Naive thymus-derived CD4-positive, alpha-beta T cell (primary cell): ENCODE measurements at regions of chr2 and their contacts with region 1.

Region 1: GRCh38 chr2:37672104-37672869 is 845 bp upstream of the CDC42EP3 start:
- DNase-seq: peak; percentile 48 to 74 (median 62)
- ATAC-seq: peak; percentile 68
- H3K4me3 ChIP-seq: peak overlapping the region; percentile 86
- H3K4me3 Mint-ChIP-seq: peak overlapping the region; percentile 78 to 96 (median 89)
- H3K27ac ChIP-seq: peak overlapping the region; percentile 72
- H3K27ac Mint-ChIP-seq: peak overlapping the region in 8 of 9 donors; percentile 65 to 91 (median 84)
- H3K4me1 ChIP-seq: peaks cover 18 to 25% of the 10 kb centered on the region in 2 donors
- H3K4me1 Mint-ChIP-seq: peaks cover 27 to 42% (median 41%) of the 10 kb centered on the region in 7 donors
- H3K27me3 ChIP-seq: no peaks in the 10 kb centered on the region
- H3K27me3 Mint-ChIP-seq: peaks cover 0 to 2% (median 0%) of the 10 kb centered on the region in 5 donors

Region 2: GRCh38 chr2:37324786-37325624 is 347.3 kb before region 1 on chr2 and contains the start of gene PRKD3:
- CTCF ChIA-PET with region 1: no interaction called
- POLR2A ChIA-PET with region 1: interaction called, 3 read pairs
- intact Hi-C with region 1: loop called (anchors 5 kb)
- DNase-seq: peak; percentile 46 to 72 (median 65)
- ATAC-seq: peak; percentile 88
- H3K4me3 ChIP-seq: peak within 1 kb of the TSS; percentile 75
- H3K4me3 Mint-ChIP-seq: peak within 1 kb of the TSS; percentile 95 to 99 (median 98)
- H3K27ac ChIP-seq: peak within 1 kb of the TSS; percentile 73
- H3K27ac Mint-ChIP-seq: peak within 1 kb of the TSS; percentile 92 to 98 (median 95)
- H3K4me1 ChIP-seq: peaks cover 30 to 31% of the 10 kb centered on the region in 2 donors
- H3K4me1 Mint-ChIP-seq: peaks cover 18 to 48% (median 36%) of the 10 kb centered on the region in 7 donors
- H3K27me3 ChIP-seq: no peaks in the 10 kb centered on the region
- H3K27me3 Mint-ChIP-seq: peaks cover 0 to 56% (median 21%) of the 10 kb centered on the region in 5 donors
- total RNA-seq, gene PRKD3: 12.8 to 47.3 (median 46.4) TPM

Region 3: DNA sequence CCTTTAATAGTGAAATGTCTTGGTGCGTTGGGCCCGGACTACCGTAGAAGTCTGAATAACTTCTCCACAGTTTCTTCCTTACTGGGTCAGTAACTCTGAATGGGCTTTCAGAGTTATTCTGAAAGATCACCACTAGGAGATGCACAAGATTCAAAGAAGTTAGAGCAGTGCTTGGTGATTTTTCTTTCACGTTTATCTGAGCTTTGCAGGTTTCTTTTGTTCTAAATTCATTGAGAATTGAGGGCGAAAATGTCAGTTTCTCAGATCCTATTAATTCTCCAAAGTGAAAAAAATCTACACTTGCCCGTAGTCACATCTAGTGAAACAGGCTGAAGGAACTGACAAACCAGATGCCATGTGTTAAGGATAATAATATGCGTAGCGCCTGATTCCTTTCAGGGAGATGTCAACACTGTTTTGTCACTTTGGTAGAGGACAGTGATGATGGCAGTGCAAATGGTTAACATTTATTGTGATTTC is 257.8 kb before region 1 on chr2:
- CTCF ChIA-PET with region 1: no interaction called
- POLR2A ChIA-PET with region 1: no interaction called
- intact Hi-C with region 1: loop called in 1 of 2 experiments (anchors 1 kb)
- DNase-seq: peak in 6 of 9 donors; percentile 28 to 63 (median 57)
- ATAC-seq: peak; percentile 85
- H3K4me3 ChIP-seq: no peak overlapping the region
- H3K4me3 Mint-ChIP-seq: no peak overlapping the region
- H3K27ac ChIP-seq: no peak overlapping the region
- H3K27ac Mint-ChIP-seq: no peak overlapping the region
- H3K4me1 ChIP-seq: no peaks in the 10 kb centered on the region
- H3K4me1 Mint-ChIP-seq: peaks cover 0 to 7% (median 5%) of the 10 kb centered on the region in 7 donors
- H3K27me3 ChIP-seq: no peaks in the 10 kb centered on the region
- H3K27me3 Mint-ChIP-seq: peaks cover 0 to 17% (median 0%) of the 10 kb centered on the region in 5 donors

Region 4: GRCh38 chr2:37585982-37586621 is 86.2 kb before region 1 on chr2:
- CTCF ChIA-PET with region 1: no interaction called
- POLR2A ChIA-PET with region 1: interaction called, 5 read pairs
- intact Hi-C with region 1: loop called (anchors 1 to 2 kb)
- DNase-seq: peak; percentile 14 to 71 (median 61)
- ATAC-seq: peak; percentile 92
- H3K4me3 ChIP-seq: no peak overlapping the region
- H3K4me3 Mint-ChIP-seq: peak overlapping the region; percentile 1 to 76 (median 58)
- H3K27ac ChIP-seq: peak overlapping the region; percentile 6
- H3K27ac Mint-ChIP-seq: peak overlapping the region; percentile 11 to 86 (median 62)
- H3K4me1 ChIP-seq: peaks cover 39 to 75% of the 10 kb centered on the region in 2 donors
- H3K4me1 Mint-ChIP-seq: peaks cover 49 to 81% (median 56%) of the 10 kb centered on the region in 7 donors
- H3K27me3 ChIP-seq: no peaks in the 10 kb centered on the region
- H3K27me3 Mint-ChIP-seq: no peaks in the 10 kb centered on the region

Region 5: DNA sequence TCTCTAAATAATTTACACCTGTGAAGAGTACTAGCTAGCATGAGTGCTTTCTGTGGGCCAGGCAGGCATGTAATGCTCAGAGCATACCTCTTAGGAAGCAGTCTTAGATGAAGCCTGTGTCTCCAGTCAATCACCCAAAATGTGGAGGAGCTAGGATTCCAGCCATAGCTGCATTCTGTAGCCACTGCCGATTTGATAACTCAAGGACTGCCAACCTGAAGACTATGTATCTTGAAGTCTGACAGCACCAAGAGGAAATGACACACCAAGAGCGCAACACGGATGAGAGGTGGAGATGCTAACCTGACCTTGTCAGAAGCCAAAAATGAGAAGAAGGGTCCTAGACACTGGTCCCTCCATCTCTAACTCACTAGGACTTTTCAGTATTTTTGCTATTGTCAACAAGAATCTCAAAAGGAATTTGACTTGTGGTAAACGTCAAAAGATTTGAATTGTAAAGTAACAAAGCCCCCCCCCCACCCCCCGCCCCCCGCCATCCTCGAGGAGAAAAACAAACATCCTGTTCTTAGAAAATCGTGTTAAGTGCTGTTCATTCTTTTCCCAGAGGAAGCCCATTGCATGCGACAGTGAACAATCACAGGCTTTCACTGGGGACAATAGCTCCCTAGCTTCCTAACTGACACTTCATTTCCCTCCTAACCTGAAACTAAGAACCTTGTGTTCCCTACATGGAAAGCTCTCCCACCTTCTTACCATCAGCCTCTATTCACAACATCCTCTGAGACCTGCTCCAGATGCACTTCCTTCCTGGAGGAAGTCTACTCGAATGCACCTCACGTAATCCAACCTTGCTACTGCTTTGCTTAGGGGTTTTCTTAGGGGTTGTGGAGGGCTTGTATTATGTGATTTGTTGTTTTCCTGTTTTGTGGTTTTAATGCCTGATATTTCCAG is 15.5 kb before region 1 on chr2:
- CTCF ChIA-PET with region 1: interaction called, 3 read pairs
- POLR2A ChIA-PET with region 1: interaction called, 5 read pairs
- intact Hi-C with region 1: loop called in 1 of 2 experiments (anchors 1 kb)
- DNase-seq: peak in 1 of 9 donors; percentile 35
- ATAC-seq: peak; percentile 43
- H3K4me3 ChIP-seq: no peak overlapping the region
- H3K4me3 Mint-ChIP-seq: peak overlapping the region; percentile 23 to 78 (median 58)
- H3K27ac ChIP-seq: no peak overlapping the region
- H3K27ac Mint-ChIP-seq: peak overlapping the region; percentile 14 to 92 (median 68)
- H3K4me1 ChIP-seq: peaks cover 44 to 77% of the 10 kb centered on the region in 2 donors
- H3K4me1 Mint-ChIP-seq: peaks cover 58 to 97% (median 88%) of the 10 kb centered on the region in 7 donors
- H3K27me3 ChIP-seq: no peaks in the 10 kb centered on the region
- H3K27me3 Mint-ChIP-seq: no peaks in the 10 kb centered on the region

Region 6: DNA sequence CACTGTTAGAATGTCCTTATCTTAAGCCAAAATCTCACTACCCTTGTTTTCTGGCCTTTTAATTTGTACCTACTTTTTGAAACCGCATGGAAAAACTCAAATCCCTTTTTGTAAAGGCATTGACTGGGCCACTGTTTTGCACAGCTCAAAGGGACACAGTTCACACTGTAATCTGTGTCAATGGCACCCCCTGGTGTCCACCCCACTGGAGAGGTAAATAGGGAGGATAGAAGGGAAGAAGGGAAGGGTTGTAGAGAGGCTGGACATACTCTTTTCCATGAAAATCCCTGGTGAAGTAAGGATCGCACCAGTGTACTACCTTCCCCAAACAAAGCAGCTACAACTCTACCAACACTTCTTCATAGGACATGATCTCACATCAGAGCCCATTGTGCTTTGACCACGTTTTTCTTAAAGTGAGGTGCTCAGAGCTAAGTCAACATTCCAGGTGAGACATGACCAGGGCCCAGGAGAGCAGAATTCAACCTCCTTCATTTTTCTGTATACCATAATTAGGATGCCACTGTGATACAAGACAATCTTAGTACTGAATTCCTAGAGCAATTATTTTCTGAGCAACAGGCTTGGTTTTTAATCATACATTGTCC is 160.4 kb after region 1 on chr2:
- CTCF ChIA-PET with region 1: no interaction called
- POLR2A ChIA-PET with region 1: no interaction called
- intact Hi-C with region 1: loop called (anchors 5 kb)
- DNase-seq: peak; percentile 56 to 82 (median 72)
- ATAC-seq: peak; percentile 87
- H3K4me3 ChIP-seq: no peak overlapping the region
- H3K4me3 Mint-ChIP-seq: no peak overlapping the region
- H3K27ac ChIP-seq: no peak overlapping the region
- H3K27ac Mint-ChIP-seq: no peak overlapping the region
- H3K4me1 ChIP-seq: no peaks in the 10 kb centered on the region
- H3K4me1 Mint-ChIP-seq: peaks cover 0 to 15% (median 5%) of the 10 kb centered on the region in 7 donors
- H3K27me3 ChIP-seq: no peaks in the 10 kb centered on the region
- H3K27me3 Mint-ChIP-seq: no peaks in the 10 kb centered on the region

Region 7: GRCh38 chr2:39356922-39357639 is 1684.8 kb after region 1 on chr2:
- CTCF ChIA-PET with region 1: no interaction called
- POLR2A ChIA-PET with region 1: no interaction called
- intact Hi-C with region 1: no loop called
- DNase-seq: no peak
- ATAC-seq: no peak
- H3K4me3 ChIP-seq: no peak overlapping the region
- H3K4me3 Mint-ChIP-seq: no peak overlapping the region
- H3K27ac ChIP-seq: no peak overlapping the region
- H3K27ac Mint-ChIP-seq: no peak overlapping the region
- H3K4me1 ChIP-seq: no peaks in the 10 kb centered on the region
- H3K4me1 Mint-ChIP-seq: no peaks in the 10 kb centered on the region
- H3K27me3 ChIP-seq: no peaks in the 10 kb centered on the region
- H3K27me3 Mint-ChIP-seq: no peaks in the 10 kb centered on the region